Prostate gland (tissue), 2 donors: ENCODE measurements at regions of chr7 and their contacts with region 1.

Region 1: GRCh38 chr7:142060936-142061335 is 50.6 kb upstream of the MGAM2 start:
- DNase-seq: no peak
- H3K4me3 ChIP-seq: no peak overlapping the region
- H3K27ac ChIP-seq: no peak overlapping the region
- H3K4me1 ChIP-seq: no peaks in the 10 kb centered on the region
- H3K27me3 ChIP-seq: no peaks in the 10 kb centered on the region
- CTCF ChIP-seq: no peak
- POLR2A ChIP-seq: no peak

Region 2: DNA sequence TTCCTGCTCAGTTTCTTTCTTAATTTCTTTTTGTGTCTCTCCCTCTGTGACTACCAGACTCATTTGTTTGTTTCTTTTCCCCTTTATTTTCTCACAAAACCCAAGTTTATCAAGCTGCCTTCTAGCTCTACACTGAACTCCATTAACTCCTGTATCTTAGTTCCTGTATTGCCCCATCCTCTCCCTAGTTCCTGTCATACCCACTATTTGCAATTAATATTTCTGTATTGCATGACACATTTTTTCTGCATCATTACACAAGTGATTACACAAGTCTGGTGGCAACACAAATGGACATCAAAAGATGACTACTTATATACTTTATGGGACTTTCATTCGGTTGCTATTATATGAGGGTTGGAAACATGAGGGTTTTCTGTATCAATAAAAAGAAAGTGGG is 171.6 kb before region 1 on chr7:
- intact Hi-C with region 1: no loop called
- DNase-seq: no peak
- H3K4me3 ChIP-seq: no peak overlapping the region
- H3K27ac ChIP-seq: no peak overlapping the region
- H3K4me1 ChIP-seq: no peaks in the 10 kb centered on the region
- H3K27me3 ChIP-seq: no peaks in the 10 kb centered on the region
- CTCF ChIP-seq: no peak
- POLR2A ChIP-seq: no peak

Region 3: DNA sequence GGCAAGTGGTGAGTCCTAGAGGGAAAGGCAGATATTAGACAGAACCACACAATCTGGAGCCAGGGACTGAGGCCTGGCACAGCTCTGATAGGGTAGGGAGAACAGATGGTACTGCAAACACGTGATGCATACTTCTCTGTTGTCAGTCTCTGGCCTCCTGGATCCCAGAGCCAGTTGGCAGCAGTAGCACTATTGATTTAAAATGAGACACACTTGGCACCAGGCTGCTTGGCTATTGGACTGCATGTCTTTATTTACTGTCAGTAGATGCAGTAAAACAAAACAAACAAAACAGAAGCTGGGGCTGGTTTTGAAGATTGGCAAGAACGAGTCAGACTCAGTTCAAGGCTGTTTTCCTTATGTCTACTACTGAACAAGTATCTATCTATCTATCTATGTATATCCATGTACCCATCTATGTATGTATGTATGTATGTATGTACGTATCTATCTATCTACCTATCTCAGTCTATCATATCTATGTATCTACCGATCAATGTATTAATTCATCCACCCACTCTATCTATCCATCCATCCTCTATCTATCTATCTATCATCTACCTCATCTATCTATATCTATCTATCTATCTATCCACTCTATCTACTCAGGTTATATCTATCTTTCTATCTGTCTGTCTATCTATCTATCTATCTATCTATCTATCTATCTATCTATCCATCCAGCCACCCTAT is 27.2 kb after region 1 on chr7:
- intact Hi-C with region 1: loop called (anchors 1 kb)
- DNase-seq: peak; percentile 81
- H3K4me3 ChIP-seq: no peak overlapping the region
- H3K27ac ChIP-seq: peak overlapping the region; percentile 30 to 44
- H3K4me1 ChIP-seq: no peaks in the 10 kb centered on the region
- H3K27me3 ChIP-seq: no peaks in the 10 kb centered on the region
- CTCF ChIP-seq: no peak
- POLR2A ChIP-seq: no peak

Region 4: GRCh38 chr7:142134909-142135308 is 74.0 kb after region 1 on chr7:
- intact Hi-C with region 1: no loop called
- DNase-seq: no peak
- H3K4me3 ChIP-seq: no peak overlapping the region
- H3K27ac ChIP-seq: no peak overlapping the region
- H3K4me1 ChIP-seq: no peaks in the 10 kb centered on the region
- H3K27me3 ChIP-seq: no peaks in the 10 kb centered on the region
- CTCF ChIP-seq: no peak
- POLR2A ChIP-seq: no peak